H1 (cell line): ENCODE measurements at regions of chr5 and their contacts with region 1.

Region 1: DNA sequence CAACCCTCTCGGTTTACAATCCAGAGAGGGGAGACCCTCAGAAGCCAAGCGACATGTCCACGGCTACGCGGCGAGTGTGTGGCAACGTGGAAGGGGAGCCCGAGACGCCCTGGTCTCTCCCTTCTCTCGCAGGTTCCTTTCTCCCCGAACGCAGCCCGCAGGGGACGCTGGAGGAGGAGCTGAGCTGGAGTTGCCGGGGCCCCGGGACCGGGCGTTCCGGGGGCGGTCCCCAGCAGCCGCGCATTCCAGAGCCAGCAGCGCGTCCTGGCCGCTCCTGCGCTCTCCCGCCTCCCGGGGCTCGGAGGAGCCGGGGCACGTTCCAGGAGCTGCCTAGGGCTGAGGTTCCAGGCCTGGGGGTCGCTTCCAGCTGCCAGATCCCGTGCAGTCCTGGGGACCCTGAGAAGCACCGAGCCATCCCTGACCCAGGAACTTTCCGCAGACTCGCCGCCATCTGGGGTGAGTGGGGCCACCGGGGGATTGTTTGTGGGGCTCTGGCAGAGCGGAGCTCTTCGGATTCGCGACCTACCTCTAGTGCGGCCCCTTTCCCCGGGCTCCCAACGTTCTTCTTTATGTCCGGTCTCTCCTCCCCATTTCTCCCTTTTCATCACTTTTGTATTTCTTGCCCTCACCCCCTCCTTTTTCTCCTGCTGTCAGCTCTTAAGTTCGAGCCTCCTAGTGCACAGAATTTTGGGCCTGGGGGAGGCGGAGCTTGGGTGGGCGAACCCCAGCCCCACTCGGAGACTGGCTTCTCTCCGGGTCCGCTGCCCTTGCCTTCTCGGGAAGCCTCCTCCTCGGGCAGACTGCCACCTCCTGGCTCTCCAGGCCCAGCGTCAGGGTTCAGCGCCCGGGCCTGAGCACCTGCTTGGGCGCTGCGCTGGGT is at the start of gene SMIM3:
- DNase-seq: peak in 1 of 2 experiments; percentile 86
- H3K4me3 ChIP-seq: peak within 1 kb of the TSS; percentile 51 to 80 (median 74)
- H3K27ac ChIP-seq: 0 out of 2 replicates have a peak within 1 kb of the TSS, but pooled peaks have one; percentile 8
- H3K4me1 ChIP-seq: peaks cover 6 to 14% (median 10%) of the 10 kb centered on the region in 4 experiments; a peak in 5 of 7 replicates
- H3K27me3 ChIP-seq: peaks cover 0 to 8% (median 0%) of the 10 kb centered on the region in 4 experiments; a peak in 3 of 7 replicates
- CTCF ChIP-seq: peak; percentile 53 to 67 (median 60)
- EP300 ChIP-seq: no peak
- POLR2A ChIP-seq: peak; percentile 34 to 82
- RAD21 ChIP-seq: peak; percentile 64 to 74
- total RNA-seq, gene SMIM3: 10.4 and 13.2 TPM in 2 replicates

Region 2: DNA sequence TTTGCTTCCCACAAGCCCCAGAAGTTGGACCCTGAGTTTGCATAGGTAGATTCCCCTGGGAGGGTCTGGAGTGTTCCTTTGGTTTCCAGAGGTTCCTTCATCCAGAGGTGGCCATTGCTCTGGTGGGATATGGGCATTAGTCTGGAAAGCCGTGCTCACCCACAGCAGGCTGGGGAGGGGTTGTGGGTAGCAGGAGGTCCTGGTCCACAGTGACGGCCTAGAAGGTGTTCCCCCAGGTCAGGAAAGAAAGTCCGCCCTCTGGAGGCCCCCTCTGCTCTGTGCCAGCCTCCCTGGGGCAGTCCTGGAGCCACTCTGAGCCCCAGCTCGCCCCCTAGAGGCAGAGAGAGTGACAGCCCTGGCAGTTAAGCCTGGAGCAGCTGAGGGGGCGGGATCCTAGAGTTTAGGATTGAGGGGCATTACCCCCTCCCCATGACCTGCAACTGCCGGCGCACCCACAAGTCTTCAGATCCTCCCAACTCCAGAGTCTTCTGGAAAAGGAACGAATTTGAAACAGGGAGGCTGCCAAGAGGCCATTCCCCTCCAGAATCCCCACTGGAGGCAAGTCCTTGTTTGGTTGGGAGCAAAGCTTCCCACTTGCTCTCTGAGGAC is 234.0 kb before region 1 on chr5:
- CTCF ChIA-PET with region 1: no interaction called
- POLR2A ChIA-PET with region 1: no interaction called
- DNase-seq: peak; percentile 67 to 97
- H3K4me3 ChIP-seq: no peak overlapping the region
- H3K27ac ChIP-seq: 0 out of 2 replicates have a peak overlapping the region, but pooled peaks have one; percentile 14
- H3K4me1 ChIP-seq: no peaks in the 10 kb centered on the region; a peak in 1 of 7 replicates
- H3K27me3 ChIP-seq: no peaks in the 10 kb centered on the region
- CTCF ChIP-seq: peak; percentile 99 to 100 (median 99)
- EP300 ChIP-seq: no peak
- POLR2A ChIP-seq: 0 out of 3 replicates have a peak, but pooled peaks of 1 of the 2 experiments have one; percentile 30
- RAD21 ChIP-seq: peak; percentile 81 to 89

Region 3: GRCh38 chr5:150656191-150657132 is 122.3 kb before region 1 on chr5:
- CTCF ChIA-PET with region 1: no interaction called
- POLR2A ChIA-PET with region 1: no interaction called
- DNase-seq: peak in 1 of 2 experiments; percentile 94
- H3K4me3 ChIP-seq: peak overlapping the region; percentile 44 to 78 (median 46)
- H3K27ac ChIP-seq: no peak overlapping the region; the same call in 1 of the 2 replicates
- H3K4me1 ChIP-seq: peaks cover 0 to 11% (median 3%) of the 10 kb centered on the region in 4 experiments; a peak in 4 of 7 replicates
- H3K27me3 ChIP-seq: no peaks in the 10 kb centered on the region; a peak in 1 of 7 replicates
- CTCF ChIP-seq: peak in 2 of 3 experiments; percentile 57 to 82; a peak in 3 of 4 replicates
- EP300 ChIP-seq: no peak
- POLR2A ChIP-seq: peak in 1 of 2 experiments; percentile 60; a peak in 2 of 3 replicates
- RAD21 ChIP-seq: peak; percentile 71 to 79

Region 4: GRCh38 chr5:150758531-150759333 is 20.0 kb before region 1 on chr5 and contains the start of gene DCTN4:
- CTCF ChIA-PET with region 1: interaction called, 18 read pairs
- POLR2A ChIA-PET with region 1: interaction called, 10 read pairs
- DNase-seq: peak; percentile 95
- H3K4me3 ChIP-seq: peak within 1 kb of the TSS; percentile 77 to 98 (median 81)
- H3K27ac ChIP-seq: peak within 1 kb of the TSS; percentile 92
- H3K4me1 ChIP-seq: peaks cover 0 to 2% (median 0%) of the 10 kb centered on the region in 4 experiments; a peak in 1 of 7 replicates
- H3K27me3 ChIP-seq: peaks cover 0 to 3% (median 0%) of the 10 kb centered on the region in 4 experiments; a peak in 1 of 7 replicates
- CTCF ChIP-seq: 0 out of 4 replicates have a peak, but pooled peaks of 1 of the 3 experiments have one; percentile 16
- EP300 ChIP-seq: no peak
- POLR2A ChIP-seq: peak; percentile 85 to 88
- RAD21 ChIP-seq: no peak
- total RNA-seq, gene DCTN4: 42.5 and 42.7 TPM in 2 replicates

Region 5: GRCh38 chr5:150846654-150847333 is 68.0 kb after region 1 on chr5:
- CTCF ChIA-PET with region 1: interaction called, 23 read pairs
- POLR2A ChIA-PET with region 1: no interaction called
- DNase-seq: peak; percentile 27 to 51
- H3K4me3 ChIP-seq: no peak overlapping the region
- H3K27ac ChIP-seq: no peak overlapping the region
- H3K4me1 ChIP-seq: peaks cover 0 to 3% (median 0%) of the 10 kb centered on the region in 4 experiments; a peak in 1 of 7 replicates
- H3K27me3 ChIP-seq: peaks cover 0 to 5% (median 4%) of the 10 kb centered on the region in 4 experiments; a peak in 4 of 7 replicates
- CTCF ChIP-seq: peak in 2 of 3 experiments; percentile 80; a peak in 3 of 4 replicates
- EP300 ChIP-seq: no peak
- POLR2A ChIP-seq: no peak
- RAD21 ChIP-seq: peak; percentile 89 to 93

Region 6: GRCh38 chr5:150931368-150931965 is 152.7 kb after region 1 on chr5:
- CTCF ChIA-PET with region 1: no interaction called
- POLR2A ChIA-PET with region 1: no interaction called
- DNase-seq: no peak
- H3K4me3 ChIP-seq: no peak overlapping the region
- H3K27ac ChIP-seq: no peak overlapping the region
- H3K4me1 ChIP-seq: no peaks in the 10 kb centered on the region
- H3K27me3 ChIP-seq: peaks cover 0 to 3% (median 0%) of the 10 kb centered on the region in 4 experiments; a peak in 1 of 7 replicates
- CTCF ChIP-seq: no peak
- EP300 ChIP-seq: no peak
- POLR2A ChIP-seq: no peak
- RAD21 ChIP-seq: no peak